ENCODE measurements at regions of chr7 and their contacts with region 1.

Region 1: DNA sequence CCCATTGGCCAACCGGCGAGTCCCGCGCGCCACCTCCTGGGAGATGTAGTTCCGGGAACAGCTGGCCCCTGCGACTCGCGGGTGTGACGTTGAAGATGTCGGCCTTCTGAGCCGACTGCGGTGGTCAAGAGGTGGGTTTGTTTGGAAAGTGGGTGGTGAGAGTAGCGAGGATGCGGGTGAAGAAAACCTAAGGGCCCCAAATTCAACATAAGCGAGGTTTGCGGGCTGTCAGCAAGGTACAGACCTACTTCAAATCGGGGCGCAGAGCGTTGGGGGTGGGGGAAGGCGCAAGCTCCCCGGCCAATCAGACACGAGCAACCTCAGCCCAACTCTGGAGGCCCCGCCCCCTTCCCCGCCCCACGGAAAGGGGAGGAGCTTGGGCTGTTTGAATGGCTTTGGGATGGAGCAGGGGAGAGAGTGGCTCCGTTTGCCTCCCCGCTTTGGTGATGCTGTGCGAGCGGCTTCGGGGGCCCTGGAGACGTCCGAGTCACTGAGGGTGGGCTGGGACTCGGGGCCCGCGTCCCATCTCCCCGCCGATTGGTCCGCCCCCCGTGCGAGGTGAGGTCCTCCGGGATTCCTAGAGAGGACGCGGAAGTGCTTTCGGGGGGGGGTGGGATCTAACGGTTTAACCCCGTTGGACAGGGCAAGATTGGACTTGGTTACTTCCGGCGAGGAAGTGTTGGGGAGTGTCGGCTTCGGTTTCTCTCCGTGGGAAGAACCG is at the start of gene ZKSCAN5:
- DNase-seq: peak; percentile 93 to 98 (median 97)
- ATAC-seq: peak; percentile 93
- H3K4me3 ChIP-seq: peak within 1 kb of the TSS; percentile 98
- H3K4me3 Mint-ChIP-seq: peak within 1 kb of the TSS; percentile 84 to 100 (median 96)
- H3K27ac ChIP-seq: peak within 1 kb of the TSS; percentile 88
- H3K27ac Mint-ChIP-seq: peak within 1 kb of the TSS; percentile 68 to 99 (median 97)
- H3K4me1 ChIP-seq: peaks cover 13 to 27% of the 10 kb centered on the region in 2 donors
- H3K4me1 Mint-ChIP-seq: peaks cover 20 to 41% (median 30%) of the 10 kb centered on the region in 7 donors
- H3K27me3 ChIP-seq: no peaks in the 10 kb centered on the region
- H3K27me3 Mint-ChIP-seq: no peaks in the 10 kb centered on the region
- total RNA-seq, gene ZKSCAN5: 4.7 to 11.0 (median 8.3) TPM

Region 2: DNA sequence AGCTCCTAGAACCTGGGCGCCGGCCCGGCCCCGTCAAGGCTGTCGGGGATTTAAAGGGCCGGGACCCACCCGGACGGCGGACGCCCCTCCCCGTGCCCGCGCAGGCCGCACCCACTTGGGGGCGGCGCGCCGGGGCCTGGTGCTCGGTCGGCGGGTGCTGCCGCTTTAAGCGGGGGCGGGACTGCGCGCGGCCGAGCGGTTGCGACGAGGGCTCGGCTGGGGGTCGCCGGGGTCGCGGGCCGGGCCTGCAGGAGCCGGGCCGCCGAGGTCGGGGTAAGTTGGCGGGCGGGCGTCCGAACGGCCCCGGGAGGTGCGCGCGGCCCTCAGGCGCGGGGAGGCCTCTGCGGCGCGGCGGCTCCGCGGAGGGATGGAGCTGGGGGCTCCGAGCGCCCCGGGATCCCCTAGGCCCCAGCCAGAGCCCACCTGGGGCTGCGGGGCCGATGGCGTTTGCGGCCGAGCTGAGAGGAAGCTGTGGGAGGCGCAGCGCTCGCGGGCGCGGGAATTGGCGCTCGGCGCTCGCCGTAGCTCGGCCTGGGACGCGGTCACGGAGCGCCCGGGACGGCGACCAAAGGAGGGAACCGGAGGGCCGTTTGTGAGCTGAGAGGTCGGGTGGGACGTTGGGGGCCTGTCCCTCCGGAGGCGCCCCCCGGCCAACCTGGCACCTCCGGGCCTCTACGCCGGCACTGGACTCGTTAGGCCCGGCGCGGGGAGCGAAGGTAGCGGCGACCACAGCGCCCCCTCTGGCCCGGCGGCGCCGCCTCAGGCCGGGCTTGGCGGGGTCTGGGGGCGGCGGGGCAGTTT is 626.2 kb before region 1 on chr7 and contains the start of gene TRRAP:
- CTCF ChIA-PET with region 1: no interaction called
- POLR2A ChIA-PET with region 1: no interaction called
- intact Hi-C with region 1: loop called in 1 of 2 experiments (anchors 5 kb)
- DNase-seq: peak; percentile 63 to 87 (median 82)
- ATAC-seq: peak; percentile 82
- H3K4me3 ChIP-seq: peak within 1 kb of the TSS; percentile 95
- H3K4me3 Mint-ChIP-seq: peak within 1 kb of the TSS; percentile 90 to 99 (median 95)
- H3K27ac ChIP-seq: peak within 1 kb of the TSS; percentile 88
- H3K27ac Mint-ChIP-seq: peak within 1 kb of the TSS; percentile 87 to 98 (median 94)
- H3K4me1 ChIP-seq: peaks cover 9 to 14% of the 10 kb centered on the region in 2 donors
- H3K4me1 Mint-ChIP-seq: peaks cover 0 to 37% (median 26%) of the 10 kb centered on the region in 7 donors
- H3K27me3 ChIP-seq: no peaks in the 10 kb centered on the region
- H3K27me3 Mint-ChIP-seq: peaks cover 0 to 3% (median 0%) of the 10 kb centered on the region in 5 donors
- total RNA-seq, gene TRRAP: 59.1 to 72.3 (median 66.8) TPM

Region 3: DNA sequence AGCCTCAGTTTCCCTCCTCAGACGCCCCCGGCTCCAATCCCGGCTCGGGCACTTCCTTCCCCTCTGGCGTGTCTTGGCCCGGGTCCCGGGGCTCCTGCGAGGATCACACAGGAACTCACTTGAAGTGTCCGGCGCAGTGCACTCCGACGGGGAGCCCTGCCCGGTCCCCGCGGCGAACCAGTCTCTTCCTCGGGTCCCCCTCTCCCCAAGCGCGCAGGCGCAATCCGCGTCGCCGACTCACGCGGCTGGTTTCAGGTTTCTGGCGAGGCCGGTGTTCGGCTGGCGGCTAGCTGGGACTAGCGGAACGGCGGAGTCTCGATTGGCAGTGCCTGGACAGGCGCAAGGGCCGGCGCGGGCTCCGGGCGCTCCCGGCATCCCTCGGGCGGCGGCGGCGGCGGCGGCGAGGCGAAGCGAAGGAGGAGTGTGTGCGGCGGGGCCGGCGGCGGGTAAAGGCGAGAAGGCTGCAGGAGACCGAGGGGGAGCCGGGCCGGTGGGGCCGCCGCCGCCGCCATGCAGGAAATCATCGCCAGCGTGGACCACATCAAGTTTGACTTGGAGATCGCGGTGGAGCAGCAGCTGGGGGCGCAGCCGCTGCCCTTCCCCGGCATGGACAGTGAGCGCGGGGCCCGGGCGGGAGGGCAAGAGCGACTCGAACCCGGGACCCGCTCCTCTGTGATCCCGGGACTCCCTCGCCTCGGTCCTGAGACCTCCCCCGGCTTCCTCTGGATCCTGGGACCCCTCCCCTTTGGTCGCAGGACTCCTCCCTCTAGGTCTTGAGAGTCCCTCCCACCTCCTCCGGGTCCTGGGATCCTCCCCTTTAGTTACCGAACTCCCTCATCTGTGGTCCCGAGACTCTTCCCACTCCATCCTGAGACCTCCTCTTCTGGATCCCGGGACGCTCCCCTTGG is 65.9 kb before region 1 on chr7 and contains the starts of genes CPSF4 and PTCD1:
- CTCF ChIA-PET with region 1: no interaction called
- POLR2A ChIA-PET with region 1: interaction called, 6 read pairs
- intact Hi-C with region 1: loop called (anchors 1 kb)
- DNase-seq: peak; percentile 71 to 92 (median 77)
- ATAC-seq: peak; percentile 95
- H3K4me3 ChIP-seq: peak within 1 kb of the TSS; percentile 93
- H3K4me3 Mint-ChIP-seq: peak within 1 kb of the TSS; percentile 92 to 100 (median 98)
- H3K27ac ChIP-seq: peak within 1 kb of the TSS; percentile 81
- H3K27ac Mint-ChIP-seq: peak within 1 kb of the TSS; percentile 85 to 95 (median 94)
- H3K4me1 ChIP-seq: peaks cover 10 to 11% of the 10 kb centered on the region in 2 donors
- H3K4me1 Mint-ChIP-seq: peaks cover 18 to 40% (median 31%) of the 10 kb centered on the region in 7 donors
- H3K27me3 ChIP-seq: no peaks in the 10 kb centered on the region
- H3K27me3 Mint-ChIP-seq: no peaks in the 10 kb centered on the region
- total RNA-seq, gene CPSF4: 36.3 to 69.4 (median 45.7) TPM
- total RNA-seq, gene PTCD1: 4.0 to 10.8 (median 8.8) TPM

Region 4: GRCh38 chr7:99551767-99552463 is 47.2 kb after region 1 on chr7 and contains the start of gene FAM200A:
- CTCF ChIA-PET with region 1: no interaction called
- POLR2A ChIA-PET with region 1: interaction called, 52 read pairs
- intact Hi-C with region 1: loop called (anchors 1 kb)
- DNase-seq: peak; percentile 62 to 88 (median 83)
- ATAC-seq: peak; percentile 99
- H3K4me3 ChIP-seq: peak within 1 kb of the TSS; percentile 93
- H3K4me3 Mint-ChIP-seq: peak within 1 kb of the TSS; percentile 85 to 95 (median 90)
- H3K27ac ChIP-seq: peak within 1 kb of the TSS; percentile 95
- H3K27ac Mint-ChIP-seq: peak within 1 kb of the TSS; percentile 73 to 98 (median 95)
- H3K4me1 ChIP-seq: peaks cover 17 to 23% of the 10 kb centered on the region in 2 donors
- H3K4me1 Mint-ChIP-seq: peaks cover 23 to 62% (median 48%) of the 10 kb centered on the region in 7 donors
- H3K27me3 ChIP-seq: no peaks in the 10 kb centered on the region
- H3K27me3 Mint-ChIP-seq: no peaks in the 10 kb centered on the region
- total RNA-seq, gene FAM200A: 1.9 to 13.6 (median 5.0) TPM

Region 5: DNA sequence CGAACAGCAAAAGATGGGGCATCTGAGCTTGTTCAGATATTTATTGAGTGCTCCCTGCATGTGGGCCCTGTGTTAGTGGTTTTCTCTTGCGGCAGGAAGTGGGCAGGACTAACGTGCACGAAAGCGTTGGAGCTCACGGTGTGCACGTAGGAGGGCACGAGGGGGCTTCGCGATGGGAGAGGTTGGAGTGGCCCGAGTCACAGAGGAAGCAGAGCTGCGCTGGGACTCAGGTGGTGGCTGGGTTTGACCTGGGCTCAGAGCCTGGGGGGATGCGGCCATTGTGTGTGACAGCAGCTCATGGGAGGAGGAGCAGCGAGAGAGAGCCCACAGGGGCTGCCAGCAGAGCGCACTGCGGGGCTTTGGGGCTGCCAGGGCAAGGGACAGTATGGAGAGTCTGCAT is 119.7 kb after region 1 on chr7:
- CTCF ChIA-PET with region 1: no interaction called
- POLR2A ChIA-PET with region 1: interaction called, 6 read pairs
- intact Hi-C with region 1: loop called in 1 of 2 experiments (anchors 2 kb)
- DNase-seq: peak; percentile 34 to 89 (median 86)
- ATAC-seq: peak; percentile 96
- H3K4me3 ChIP-seq: peak overlapping the region; percentile 62
- H3K4me3 Mint-ChIP-seq: peak overlapping the region; percentile 83 to 95 (median 89)
- H3K27ac ChIP-seq: peak overlapping the region; percentile 89
- H3K27ac Mint-ChIP-seq: peak overlapping the region; percentile 91 to 100 (median 97)
- H3K4me1 ChIP-seq: peaks cover 23 to 30% of the 10 kb centered on the region in 2 donors
- H3K4me1 Mint-ChIP-seq: peaks cover 34 to 76% (median 60%) of the 10 kb centered on the region in 7 donors
- H3K27me3 ChIP-seq: no peaks in the 10 kb centered on the region
- H3K27me3 Mint-ChIP-seq: no peaks in the 10 kb centered on the region

Region 6: GRCh38 chr7:99829524-99830160 is 324.9 kb after region 1 on chr7:
- CTCF ChIA-PET with region 1: no interaction called
- POLR2A ChIA-PET with region 1: no interaction called
- intact Hi-C with region 1: no loop called
- DNase-seq: no peak
- ATAC-seq: no peak
- H3K4me3 ChIP-seq: no peak overlapping the region
- H3K4me3 Mint-ChIP-seq: no peak overlapping the region
- H3K27ac ChIP-seq: no peak overlapping the region
- H3K27ac Mint-ChIP-seq: no peak overlapping the region
- H3K4me1 ChIP-seq: no peaks in the 10 kb centered on the region
- H3K4me1 Mint-ChIP-seq: no peaks in the 10 kb centered on the region
- H3K27me3 ChIP-seq: no peaks in the 10 kb centered on the region
- H3K27me3 Mint-ChIP-seq: peaks cover 0 to 27% (median 7%) of the 10 kb centered on the region in 5 donors

Region 7: GRCh38 chr7:100015232-100016209 is 510.8 kb after region 1 on chr7 and contains the start of gene ZKSCAN1:
- CTCF ChIA-PET with region 1: no interaction called
- POLR2A ChIA-PET with region 1: interaction called, 6 read pairs
- intact Hi-C with region 1: loop called (anchors 1 to 2 kb)
- DNase-seq: peak; percentile 68 to 86 (median 81)
- ATAC-seq: peak; percentile 99
- H3K4me3 ChIP-seq: peak within 1 kb of the TSS; percentile 51
- H3K4me3 Mint-ChIP-seq: peak within 1 kb of the TSS; percentile 92 to 98 (median 96)
- H3K27ac ChIP-seq: peak within 1 kb of the TSS; percentile 98
- H3K27ac Mint-ChIP-seq: peak within 1 kb of the TSS; percentile 91 to 98 (median 97)
- H3K4me1 ChIP-seq: peaks cover 19 to 22% of the 10 kb centered on the region in 2 donors
- H3K4me1 Mint-ChIP-seq: peaks cover 23 to 57% (median 44%) of the 10 kb centered on the region in 7 donors
- H3K27me3 ChIP-seq: no peaks in the 10 kb centered on the region
- H3K27me3 Mint-ChIP-seq: peaks cover 0 to 3% (median 0%) of the 10 kb centered on the region in 5 donors
- total RNA-seq, gene ZKSCAN1: 54.0 to 103 (median 70.1) TPM

Measured in naive thymus-derived CD4-positive, alpha-beta T cell (primary cell).